Gastrocnemius medialis (tissue), 4 donors: ENCODE measurements at regions of chr1 and their contacts with region 1.

Region 1: DNA sequence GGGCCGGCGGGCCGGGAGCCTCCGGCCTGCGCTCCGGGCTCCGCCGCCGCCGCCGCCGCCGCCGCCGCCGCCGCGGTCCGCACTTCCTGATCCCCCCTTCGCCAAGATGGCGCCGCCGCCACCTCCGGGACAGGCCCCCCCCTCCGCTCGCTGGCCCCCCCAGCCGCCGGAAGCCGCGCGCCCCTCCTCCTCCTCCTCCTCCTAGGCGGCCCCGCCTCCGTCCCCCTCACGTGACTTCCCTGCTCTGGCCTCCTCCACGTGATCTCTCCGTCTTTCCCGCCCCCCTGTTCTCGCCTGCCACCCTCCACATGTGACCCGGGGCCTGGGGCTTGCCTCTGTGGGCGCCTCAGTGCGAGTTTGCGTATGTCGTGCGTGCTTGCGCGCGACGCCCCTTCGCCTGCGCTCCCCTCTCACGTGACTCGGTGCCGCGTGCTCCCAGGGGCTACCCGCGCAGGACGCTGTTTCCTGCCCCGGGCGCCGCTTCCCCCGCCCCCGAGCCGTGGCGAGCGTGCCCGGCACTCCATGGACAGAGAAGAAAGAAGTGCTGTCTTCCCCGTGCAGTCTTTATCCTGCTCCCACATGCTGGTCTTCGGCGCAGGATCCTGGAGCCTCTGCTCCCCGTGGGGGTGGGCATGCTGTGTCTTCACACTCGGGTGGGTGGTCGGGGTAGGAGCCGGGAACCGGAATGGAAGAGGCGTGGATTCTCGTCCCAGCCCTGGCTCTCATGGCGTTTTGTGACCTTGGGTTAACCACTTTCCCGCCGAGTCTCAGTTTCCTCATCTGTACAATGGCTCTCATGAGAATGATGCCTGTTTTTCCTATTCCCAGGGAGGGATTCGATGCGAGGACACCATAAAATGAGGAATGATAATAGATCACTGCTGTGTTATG is at the start of gene UBE2Q1:
- DNase-seq: peak; percentile 100
- ATAC-seq: peak; percentile 87 to 89
- H3K4me3 ChIP-seq: peak within 1 kb of the TSS; percentile 66 to 90 (median 76)
- H3K27ac ChIP-seq: peak within 1 kb of the TSS; percentile 94 to 98 (median 97)
- H3K4me1 ChIP-seq: peaks cover 29 to 31% of the 10 kb centered on the region in 2 donors
- H3K27me3 ChIP-seq: no peaks in the 10 kb centered on the region
- CTCF ChIP-seq: peak in 1 of 5 experiments; percentile 35
- POLR2A ChIP-seq: peak; percentile 79 to 86
- total RNA-seq, gene UBE2Q1: 18.8 to 42.8 (median 24.1) TPM

Region 2: DNA sequence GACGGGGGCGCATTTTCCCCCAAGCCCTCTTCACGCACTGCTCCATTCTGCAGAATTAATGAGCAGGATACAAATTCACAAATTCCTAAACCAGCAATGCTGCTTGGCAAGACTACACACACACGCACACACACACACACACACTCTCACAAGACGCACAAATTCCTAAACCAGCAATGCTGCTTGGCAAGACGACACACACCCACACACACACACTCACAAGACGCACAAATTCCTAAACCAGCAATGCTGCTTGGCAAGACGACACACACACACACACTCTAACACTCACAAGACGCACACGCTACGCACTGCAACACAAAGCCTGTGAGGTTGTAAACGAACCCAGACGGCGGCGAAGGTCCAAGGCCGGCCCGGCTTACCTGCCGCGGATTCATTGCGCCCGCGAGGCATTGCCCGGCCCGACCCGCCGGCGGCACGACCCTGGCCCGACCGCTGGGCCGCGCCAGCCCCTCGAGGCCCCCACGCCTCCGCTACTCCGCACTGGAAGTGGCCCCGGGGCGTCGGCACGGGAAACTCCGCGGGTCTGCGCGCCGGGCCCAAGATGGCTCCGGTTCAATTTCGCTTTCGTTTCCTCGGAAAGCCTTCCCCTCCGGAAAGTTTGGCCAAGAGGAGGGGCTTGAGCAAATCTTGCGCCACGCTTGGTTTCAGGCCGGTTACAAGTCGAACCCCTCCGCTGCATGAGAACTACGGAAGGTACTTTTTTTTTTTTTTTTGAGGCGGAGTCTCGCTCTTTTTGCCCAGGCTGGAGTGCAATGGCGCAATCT is 49.0 kb after region 1 on chr1 and contains the start of gene ADAR:
- in situ Hi-C with region 1: no loop called
- intact Hi-C with region 1: loop called (anchors 1 kb)
- DNase-seq: peak; percentile 85 to 91
- ATAC-seq: peak; percentile 95 to 97
- H3K4me3 ChIP-seq: peak within 1 kb of the TSS; percentile 63 to 98 (median 80)
- H3K27ac ChIP-seq: peak within 1 kb of the TSS; percentile 79 to 97 (median 87)
- H3K4me1 ChIP-seq: peaks cover 21 to 46% of the 10 kb centered on the region in 2 donors
- H3K27me3 ChIP-seq: no peaks in the 10 kb centered on the region
- CTCF ChIP-seq: no peak
- POLR2A ChIP-seq: peak; percentile 48 to 51
- total RNA-seq, gene ADAR: 16.4 to 38.4 (median 19.0) TPM

Region 3: DNA sequence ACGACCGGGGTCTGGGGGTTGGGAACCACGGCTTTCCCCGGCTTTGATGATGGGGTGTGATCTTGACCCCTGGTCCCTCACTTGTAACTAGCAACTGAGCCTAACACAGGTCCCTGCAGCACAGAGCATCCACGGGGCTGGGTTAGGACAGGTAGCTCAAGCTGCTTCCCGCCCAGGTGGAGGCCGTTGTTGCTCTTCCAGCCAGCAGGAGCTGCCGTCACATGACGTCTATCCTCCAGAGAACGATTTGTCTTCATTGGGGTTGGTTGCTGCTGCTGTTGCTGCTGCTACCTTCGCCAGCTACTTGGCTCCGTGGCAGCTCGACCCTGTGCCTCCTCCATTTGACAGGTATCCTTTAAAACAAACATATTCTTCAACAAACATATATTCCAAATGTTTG is 123.4 kb after region 1 on chr1:
- in situ Hi-C with region 1: no loop called
- intact Hi-C with region 1: no loop called
- DNase-seq: no peak
- ATAC-seq: no peak
- H3K4me3 ChIP-seq: no peak overlapping the region
- H3K27ac ChIP-seq: no peak overlapping the region
- H3K4me1 ChIP-seq: no peaks in the 10 kb centered on the region
- H3K27me3 ChIP-seq: no peaks in the 10 kb centered on the region
- CTCF ChIP-seq: no peak
- POLR2A ChIP-seq: no peak

Region 4: DNA sequence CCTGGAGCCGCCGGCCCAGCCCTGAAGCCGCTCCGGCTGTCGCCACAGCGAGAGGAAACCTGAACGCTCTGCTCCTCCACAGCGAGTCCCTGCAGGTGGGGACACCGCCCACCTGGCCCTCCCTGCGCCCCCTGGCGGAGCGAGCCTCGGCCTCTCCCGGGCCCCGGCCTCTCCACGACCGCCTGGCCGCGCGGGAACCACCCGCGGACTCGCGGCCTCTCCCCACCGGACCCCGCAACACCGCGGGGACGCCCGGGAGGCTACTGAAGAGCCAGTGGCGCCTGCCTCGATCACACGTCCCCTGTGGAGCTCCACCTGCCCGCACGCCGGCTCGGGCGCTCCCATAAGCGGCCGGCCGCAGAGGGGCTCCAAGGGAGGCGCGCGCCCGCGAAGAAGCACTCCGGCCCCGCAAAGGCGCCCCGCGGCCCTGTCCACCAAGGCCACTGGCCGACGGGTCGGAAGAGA is 201.7 kb after region 1 on chr1:
- in situ Hi-C with region 1: loop called in 1 of 4 experiments (anchors 25 kb)
- intact Hi-C with region 1: no loop called
- DNase-seq: no peak
- ATAC-seq: no peak
- H3K4me3 ChIP-seq: peak overlapping the region in 1 of 4 donors; percentile 24
- H3K27ac ChIP-seq: no peak overlapping the region
- H3K4me1 ChIP-seq: no peaks in the 10 kb centered on the region
- H3K27me3 ChIP-seq: no peaks in the 10 kb centered on the region
- CTCF ChIP-seq: peak in 4 of 5 experiments; percentile 46 to 50 (median 48)
- POLR2A ChIP-seq: no peak

Region 5: GRCh38 chr1:154884869-154885701 is 326.3 kb after region 1 on chr1:
- in situ Hi-C with region 1: loop called in 2 of 4 experiments (anchors 10 kb)
- intact Hi-C with region 1: no loop called
- DNase-seq: no peak
- ATAC-seq: no peak
- H3K4me3 ChIP-seq: no peak overlapping the region
- H3K27ac ChIP-seq: no peak overlapping the region
- H3K4me1 ChIP-seq: no peaks in the 10 kb centered on the region
- H3K27me3 ChIP-seq: no peaks in the 10 kb centered on the region
- CTCF ChIP-seq: no peak
- POLR2A ChIP-seq: no peak

Region 6: DNA sequence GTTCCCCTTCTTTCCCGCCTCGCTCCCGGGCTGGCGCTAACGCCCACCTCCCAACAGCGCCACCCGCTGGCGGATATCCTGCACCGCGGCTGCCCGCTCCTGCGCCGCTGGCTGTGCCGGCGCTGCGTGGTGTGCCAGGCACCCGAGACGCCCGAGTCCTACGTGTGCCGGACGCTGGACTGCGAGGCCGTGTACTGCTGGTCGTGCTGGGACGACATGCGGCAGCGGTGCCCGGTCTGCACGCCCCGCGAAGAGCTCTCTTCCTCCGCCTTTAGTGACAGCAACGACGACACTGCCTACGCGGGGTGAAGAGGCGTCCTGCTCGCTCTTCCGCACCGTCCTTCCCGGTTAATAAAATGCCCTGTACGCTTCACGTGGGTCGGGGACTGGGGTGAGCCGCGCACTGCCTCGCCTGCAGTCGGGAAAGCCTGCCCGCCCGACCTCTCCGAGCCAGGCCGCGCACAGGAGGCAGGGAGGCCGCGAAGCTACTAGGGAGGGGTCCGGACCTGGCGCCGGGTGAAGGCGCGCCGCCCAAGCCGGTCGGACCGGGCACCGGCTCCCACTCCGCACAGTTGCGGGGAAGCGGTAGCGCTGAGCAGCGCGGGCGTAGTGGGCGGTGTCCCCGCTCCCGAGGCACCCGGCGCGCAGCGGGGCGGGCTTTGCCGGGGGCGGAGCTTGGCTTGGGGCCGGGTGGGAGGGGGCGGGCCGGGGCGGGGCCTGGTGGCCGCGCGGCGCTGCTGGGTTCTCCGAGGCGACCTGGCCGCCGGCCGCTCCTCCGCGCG is 491.9 kb after region 1 on chr1 and contains the start of gene ADAM15:
- in situ Hi-C with region 1: no loop called
- intact Hi-C with region 1: loop called (anchors 2 kb)
- DNase-seq: peak; percentile 64 to 82
- ATAC-seq: peak; percentile 78 to 83
- H3K4me3 ChIP-seq: peak within 1 kb of the TSS; percentile 82 to 96 (median 90)
- H3K27ac ChIP-seq: peak within 1 kb of the TSS; percentile 90 to 99 (median 94)
- H3K4me1 ChIP-seq: peaks cover 25 to 29% of the 10 kb centered on the region in 2 donors
- H3K27me3 ChIP-seq: no peaks in the 10 kb centered on the region
- CTCF ChIP-seq: peak; percentile 91 to 98 (median 95)
- POLR2A ChIP-seq: no peak
- total RNA-seq, gene ADAM15: 30.3 to 42.8 (median 36.9) TPM